HEK293 (cell line): ENCODE measurements at regions of chr21 and their contacts with region 1.

Region 1: DNA sequence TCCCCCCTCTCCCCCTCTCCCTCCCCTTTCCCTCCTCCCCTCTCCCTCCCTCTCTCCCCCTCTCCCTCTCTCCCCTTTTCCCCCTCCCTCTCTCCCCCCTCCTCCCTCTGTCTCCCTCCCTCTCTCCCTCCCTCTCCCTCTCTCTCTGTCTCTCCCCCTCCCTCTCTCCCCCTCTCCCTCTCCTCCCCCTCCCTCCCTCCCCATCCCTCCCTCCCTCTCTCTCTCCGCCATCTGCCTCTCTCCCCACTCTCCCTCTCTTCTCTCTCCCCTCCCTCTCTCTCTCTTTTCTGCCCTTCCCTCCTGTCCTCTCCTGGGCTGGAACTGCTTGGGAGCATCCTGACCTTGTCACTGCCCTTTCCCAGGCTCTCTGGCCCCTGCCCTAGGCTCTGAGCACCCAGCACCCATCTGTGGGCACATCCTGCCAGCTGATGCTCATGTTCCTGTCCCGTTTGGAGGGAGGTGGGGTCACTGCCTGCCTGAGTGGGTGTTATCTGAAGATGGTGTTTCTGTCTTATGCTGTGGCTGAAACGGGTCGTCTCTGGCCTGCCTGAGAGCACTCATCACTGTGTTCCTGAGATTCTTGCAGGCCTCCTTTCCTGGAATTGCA is 10.8 kb downstream of the FTCD start:
- H3K4me3 ChIP-seq: no peak overlapping the region
- H3K27ac ChIP-seq: no peak overlapping the region
- H3K4me1 ChIP-seq: 0 out of 2 replicates have a peak, but pooled peaks cover 4% of the 10 kb centered on the region
- CTCF ChIP-seq: no peak

Region 2: DNA sequence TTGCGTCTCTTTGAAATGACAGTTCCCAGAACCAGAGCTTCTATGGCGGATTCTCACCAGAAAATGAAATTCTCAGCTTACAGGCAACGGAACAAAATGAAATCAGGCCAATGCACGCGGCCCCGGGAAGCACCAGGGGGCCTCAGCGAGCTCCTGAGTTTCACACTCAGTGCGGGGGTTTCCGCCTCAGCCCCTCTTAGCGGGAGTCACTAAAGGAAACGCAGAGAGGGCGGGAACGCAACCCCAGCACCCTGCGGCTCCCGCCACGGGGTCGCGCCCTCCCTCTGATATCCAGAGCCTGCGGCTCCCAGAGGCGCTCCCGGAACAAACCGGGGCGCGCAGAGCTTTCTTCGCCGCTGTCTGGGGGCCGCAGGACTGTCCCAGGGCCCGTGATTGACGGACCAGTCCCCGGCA is 170.9 kb before region 1 on chr21:
- CTCF ChIA-PET with region 1: interaction called, 22 read pairs
- POLR2A ChIA-PET with region 1: interaction called, 9 read pairs
- H3K4me3 ChIP-seq: peak overlapping the region; percentile 24
- H3K27ac ChIP-seq: peak overlapping the region; percentile 73
- H3K4me1 ChIP-seq: peaks cover 23% of the 10 kb centered on the region
- CTCF ChIP-seq: peak; percentile 78

Region 3: GRCh38 chr21:46110499-46111192 is 33.9 kb before region 1 on chr21:
- CTCF ChIA-PET with region 1: interaction called, 10 read pairs
- POLR2A ChIA-PET with region 1: no interaction called
- H3K4me3 ChIP-seq: no peak overlapping the region
- H3K27ac ChIP-seq: no peak overlapping the region
- H3K4me1 ChIP-seq: no peaks in the 10 kb centered on the region
- CTCF ChIP-seq: no peak

Region 4: GRCh38 chr21:46128106-46128860 is 16.3 kb before region 1 on chr21:
- CTCF ChIA-PET with region 1: interaction called, 14 read pairs
- POLR2A ChIA-PET with region 1: no interaction called
- H3K4me3 ChIP-seq: no peak overlapping the region
- H3K27ac ChIP-seq: no peak overlapping the region
- H3K4me1 ChIP-seq: no peaks in the 10 kb centered on the region
- CTCF ChIP-seq: no peak

Region 5: DNA sequence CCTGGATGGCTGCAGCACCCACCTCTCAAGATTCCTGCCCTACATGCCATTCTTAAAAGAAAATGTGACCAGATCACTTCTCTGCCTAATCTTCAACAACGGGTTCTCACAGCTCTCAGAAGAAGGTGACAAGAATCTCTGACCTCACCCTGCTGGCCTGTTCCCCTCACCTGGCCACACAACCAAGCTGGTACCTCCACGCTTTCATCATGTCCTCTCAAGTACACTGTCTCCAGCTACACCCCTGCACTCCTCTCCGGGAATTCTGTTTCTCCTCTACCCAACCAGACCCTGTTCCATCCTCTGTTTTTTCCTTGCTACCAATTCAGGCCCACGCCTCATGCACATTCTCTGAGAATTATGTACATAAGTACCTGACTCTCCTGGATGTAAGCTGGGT is 89.9 kb after region 1 on chr21:
- CTCF ChIA-PET with region 1: interaction called, 13 read pairs
- POLR2A ChIA-PET with region 1: no interaction called
- H3K4me3 ChIP-seq: no peak overlapping the region
- H3K27ac ChIP-seq: no peak overlapping the region
- H3K4me1 ChIP-seq: no peaks in the 10 kb centered on the region
- CTCF ChIP-seq: no peak

Region 6: GRCh38 chr21:46264690-46265144 is 120.2 kb after region 1 on chr21:
- CTCF ChIA-PET with region 1: interaction called, 10 read pairs
- POLR2A ChIA-PET with region 1: no interaction called
- H3K4me3 ChIP-seq: no peak overlapping the region
- H3K27ac ChIP-seq: no peak overlapping the region
- H3K4me1 ChIP-seq: no peaks in the 10 kb centered on the region
- CTCF ChIP-seq: no peak